ENCODE measurements at regions of chr1 and their contacts with region 1.

Region 1: DNA sequence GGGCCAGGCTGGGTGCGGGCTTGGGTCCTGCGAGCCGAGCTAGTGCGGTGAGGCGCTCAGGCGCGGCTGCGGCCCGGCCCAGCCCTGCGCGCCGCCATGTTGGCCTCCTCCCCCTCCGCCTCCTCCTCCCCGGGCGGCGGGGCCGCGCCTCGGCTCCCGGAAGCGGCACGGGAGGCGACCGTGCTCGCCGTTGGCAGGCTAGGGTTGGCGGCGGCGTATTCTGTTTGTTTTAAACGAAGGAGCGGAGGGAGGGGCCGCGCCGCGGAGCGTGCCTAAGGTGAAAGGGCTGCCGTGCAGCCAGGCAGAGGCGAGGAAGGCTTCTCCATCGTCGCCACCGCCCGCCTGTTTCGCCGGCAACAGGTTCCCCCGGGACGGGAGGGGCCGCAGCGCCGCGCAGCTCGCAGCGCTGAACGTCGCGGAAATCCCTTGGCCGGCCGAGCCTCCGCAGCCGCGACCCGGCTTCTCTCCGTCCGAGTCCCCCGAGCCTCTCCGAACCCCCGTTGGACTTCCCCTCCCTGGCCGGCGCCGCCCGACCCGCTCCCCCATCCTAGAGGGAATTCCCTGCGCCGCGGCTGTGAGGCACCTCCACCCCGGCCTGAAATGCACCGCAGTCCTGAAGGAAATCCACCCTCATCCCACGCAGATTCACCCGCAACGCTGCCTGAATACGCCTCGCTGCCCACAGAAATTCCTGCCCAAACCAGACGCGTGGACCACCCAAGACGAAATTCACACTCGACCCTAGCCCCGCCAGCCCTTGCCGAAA is at the start of gene USP24:
- DNase-seq: peak in 1 of 2 donors; percentile 85
- H3K4me3 ChIP-seq: peak within 1 kb of the TSS; percentile 82 to 93
- H3K27ac ChIP-seq: peak within 1 kb of the TSS; percentile 95 to 99
- H3K4me1 ChIP-seq: peaks cover 3 to 17% of the 10 kb centered on the region in 2 donors
- H3K27me3 ChIP-seq: no peaks in the 10 kb centered on the region
- CTCF ChIP-seq: no peak
- total RNA-seq, gene USP24: 11.2 TPM

Region 2: GRCh38 chr1:55140546-55140983 is 74.9 kb before region 1 on chr1:
- intact Hi-C with region 1: loop called (anchors 5 kb)
- DNase-seq: peak in 1 of 2 donors; percentile 85
- H3K4me3 ChIP-seq: no peak overlapping the region
- H3K27ac ChIP-seq: peak overlapping the region in 1 of 2 donors; percentile 9
- H3K4me1 ChIP-seq: no peaks in the 10 kb centered on the region
- H3K27me3 ChIP-seq: no peaks in the 10 kb centered on the region
- CTCF ChIP-seq: peak; percentile 65 to 86 (median 76)

Region 3: DNA sequence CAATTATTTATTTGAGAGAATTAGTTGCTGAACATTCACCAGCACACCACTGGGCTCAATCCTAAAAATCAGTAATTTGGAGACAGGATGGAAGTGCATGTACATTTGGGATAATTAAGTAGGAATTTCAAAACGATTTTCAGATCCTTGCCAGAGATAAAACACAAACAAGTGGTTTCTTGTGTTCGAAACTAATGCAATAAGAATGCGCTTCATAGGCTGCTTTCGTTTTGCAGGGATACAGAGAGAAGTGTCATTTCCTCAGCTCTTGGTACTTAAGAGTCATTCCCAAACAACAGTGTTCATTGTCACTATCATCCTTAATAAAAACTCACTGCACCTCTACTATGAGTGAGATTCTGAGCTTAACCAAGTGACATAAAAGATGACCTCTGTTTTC is 20.3 kb after region 1 on chr1:
- intact Hi-C with region 1: no loop called
- DNase-seq: no peak
- H3K4me3 ChIP-seq: no peak overlapping the region
- H3K27ac ChIP-seq: no peak overlapping the region
- H3K4me1 ChIP-seq: no peaks in the 10 kb centered on the region
- H3K27me3 ChIP-seq: no peaks in the 10 kb centered on the region
- CTCF ChIP-seq: no peak

Region 4: GRCh38 chr1:55277377-55278130 is 62.1 kb after region 1 on chr1:
- intact Hi-C with region 1: loop called (anchors 1 kb)
- DNase-seq: peak in 1 of 2 donors; percentile 89
- H3K4me3 ChIP-seq: no peak overlapping the region
- H3K27ac ChIP-seq: no peak overlapping the region
- H3K4me1 ChIP-seq: peaks cover 0 to 6% of the 10 kb centered on the region in 2 donors
- H3K27me3 ChIP-seq: no peaks in the 10 kb centered on the region
- CTCF ChIP-seq: peak; percentile 68 to 80 (median 74)

Region 5: GRCh38 chr1:56644919-56645676 is 1429.7 kb after region 1 on chr1 and contains the start of gene PRKAA2:
- intact Hi-C with region 1: loop called (anchors 10 kb)
- DNase-seq: peak in 1 of 2 donors; percentile 64
- H3K4me3 ChIP-seq: peak within 1 kb of the TSS; percentile 91 to 94
- H3K27ac ChIP-seq: peak within 1 kb of the TSS; percentile 10 to 65
- H3K4me1 ChIP-seq: no peaks in the 10 kb centered on the region
- H3K27me3 ChIP-seq: no peaks in the 10 kb centered on the region
- CTCF ChIP-seq: no peak
- total RNA-seq, gene PRKAA2: 1.4 TPM

Measured in ascending aorta (tissue), 2 donors.